Activated B cell treated with CpG ODN at 0.5 μM for 24 hours (primary cell): ENCODE measurements at regions of chr12 and their contacts with region 1.

Region 1: DNA sequence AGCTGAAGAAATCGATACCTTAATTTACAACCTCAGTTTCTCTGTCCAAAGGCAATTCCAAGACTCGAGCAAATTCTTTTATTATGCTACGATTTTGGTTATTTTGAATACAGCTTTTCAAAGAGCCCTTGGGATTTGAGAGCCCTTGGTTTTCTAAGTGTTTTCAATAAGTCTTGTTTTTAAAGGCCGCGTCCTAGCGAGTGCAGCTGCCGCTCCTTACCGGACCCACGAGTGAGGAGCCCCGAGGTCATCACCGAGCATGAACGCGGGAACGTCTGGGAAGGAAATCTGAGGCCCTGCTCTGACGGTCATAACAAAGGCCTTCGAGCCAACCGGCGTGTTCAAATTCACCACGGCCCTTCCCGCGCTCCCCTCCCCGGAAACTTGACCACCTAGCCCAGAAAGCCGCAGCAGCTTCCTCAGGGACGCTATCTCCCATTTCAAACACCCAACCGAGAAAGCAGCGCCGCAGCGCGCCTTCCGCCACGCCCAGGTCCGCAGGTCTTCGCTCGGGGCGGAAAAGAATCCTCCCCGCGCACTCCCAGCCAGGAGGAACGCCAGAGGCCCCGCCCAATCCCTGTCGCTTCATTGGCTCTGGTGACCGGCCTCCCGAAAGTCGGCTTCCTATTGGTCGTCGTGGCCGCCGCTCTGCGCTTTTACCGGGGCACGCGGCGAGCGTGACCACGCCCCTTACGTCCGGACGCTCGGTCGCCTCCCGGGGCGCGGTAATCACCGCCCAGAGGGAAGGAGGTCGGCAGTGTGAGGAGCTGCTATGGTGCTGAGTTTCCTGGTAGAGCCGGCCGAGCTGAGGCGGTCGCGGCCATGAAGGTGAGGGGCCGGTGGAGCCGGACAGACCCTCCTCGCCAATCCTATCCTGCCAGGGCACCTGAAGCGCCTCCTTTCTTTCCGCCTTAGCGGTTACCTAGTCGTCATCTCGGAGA is at the start of gene RNF34:
- DNase-seq: peak; percentile 93
- ATAC-seq: peak; percentile 91
- H3K4me3 Mint-ChIP-seq: peak within 1 kb of the TSS; percentile 96
- H3K27ac Mint-ChIP-seq: peak within 1 kb of the TSS; percentile 95
- H3K4me1 Mint-ChIP-seq: peaks cover 37% of the 10 kb centered on the region
- H3K27me3 Mint-ChIP-seq: no peaks in the 10 kb centered on the region
- CTCF ChIP-seq: no peak
- total RNA-seq, gene RNF34: 71.2 and 75.3 TPM in 2 replicates

Region 2: DNA sequence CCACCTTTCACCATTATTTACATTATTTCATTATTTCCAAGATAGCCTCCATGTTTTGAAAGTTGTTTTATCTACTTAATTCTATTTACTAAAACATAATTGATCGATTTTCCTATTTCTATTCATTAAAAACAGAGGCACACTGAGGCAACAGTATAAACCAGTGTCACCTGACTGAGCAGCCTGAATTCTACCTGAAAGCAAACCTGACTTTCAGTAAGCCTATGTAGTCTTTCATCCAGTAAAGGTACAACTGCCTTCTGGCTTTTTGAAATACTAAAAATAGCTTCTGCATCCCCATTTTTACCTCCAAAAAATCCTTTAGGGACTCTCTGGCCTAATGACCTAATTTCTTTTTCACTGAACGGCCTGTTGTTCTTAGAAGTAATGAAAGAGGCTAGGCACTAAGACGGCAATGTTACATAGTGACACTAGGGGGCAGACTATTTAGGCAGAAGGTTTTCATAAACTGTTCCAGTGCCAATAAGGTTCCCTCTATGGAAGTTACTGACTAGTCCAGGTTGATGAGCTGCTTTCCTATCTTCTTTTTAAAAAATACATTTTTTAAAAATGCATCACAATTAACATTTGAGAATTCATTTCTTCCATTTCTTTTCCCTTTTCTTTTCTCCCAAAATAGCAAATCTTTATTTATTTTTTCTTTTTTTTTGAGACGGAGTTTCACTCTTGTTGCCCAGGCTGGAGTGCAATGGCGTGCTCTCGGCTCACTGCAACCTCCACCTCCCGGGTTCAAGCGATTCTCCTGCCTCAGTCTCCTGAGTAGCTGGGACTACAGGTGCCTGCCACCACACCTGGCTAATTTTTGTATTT is 64.9 kb before region 1 on chr12:
- CTCF ChIA-PET with region 1: interaction called, 3 read pairs
- POLR2A ChIA-PET with region 1: interaction called, 3 read pairs
- intact Hi-C with region 1: loop called (anchors 1 kb)
- DNase-seq: no peak
- ATAC-seq: peak; percentile 69
- H3K4me3 Mint-ChIP-seq: no peak overlapping the region
- H3K27ac Mint-ChIP-seq: no peak overlapping the region
- H3K4me1 Mint-ChIP-seq: peaks cover 2% of the 10 kb centered on the region
- H3K27me3 Mint-ChIP-seq: no peaks in the 10 kb centered on the region
- CTCF ChIP-seq: peak; percentile 82

Region 3: GRCh38 chr12:121351820-121352681 is 47.6 kb before region 1 on chr12 and contains the start of gene ANAPC5:
- CTCF ChIA-PET with region 1: interaction called, 7 read pairs
- POLR2A ChIA-PET with region 1: interaction called, 42 read pairs
- intact Hi-C with region 1: loop called (anchors 1 kb)
- DNase-seq: peak; percentile 73
- ATAC-seq: peak; percentile 99
- H3K4me3 Mint-ChIP-seq: peak within 1 kb of the TSS; percentile 94
- H3K27ac Mint-ChIP-seq: peak within 1 kb of the TSS; percentile 91
- H3K4me1 Mint-ChIP-seq: peaks cover 28% of the 10 kb centered on the region
- H3K27me3 Mint-ChIP-seq: no peaks in the 10 kb centered on the region
- CTCF ChIP-seq: no peak
- total RNA-seq, gene ANAPC5: 116 and 143 TPM in 2 replicates

Region 4: DNA sequence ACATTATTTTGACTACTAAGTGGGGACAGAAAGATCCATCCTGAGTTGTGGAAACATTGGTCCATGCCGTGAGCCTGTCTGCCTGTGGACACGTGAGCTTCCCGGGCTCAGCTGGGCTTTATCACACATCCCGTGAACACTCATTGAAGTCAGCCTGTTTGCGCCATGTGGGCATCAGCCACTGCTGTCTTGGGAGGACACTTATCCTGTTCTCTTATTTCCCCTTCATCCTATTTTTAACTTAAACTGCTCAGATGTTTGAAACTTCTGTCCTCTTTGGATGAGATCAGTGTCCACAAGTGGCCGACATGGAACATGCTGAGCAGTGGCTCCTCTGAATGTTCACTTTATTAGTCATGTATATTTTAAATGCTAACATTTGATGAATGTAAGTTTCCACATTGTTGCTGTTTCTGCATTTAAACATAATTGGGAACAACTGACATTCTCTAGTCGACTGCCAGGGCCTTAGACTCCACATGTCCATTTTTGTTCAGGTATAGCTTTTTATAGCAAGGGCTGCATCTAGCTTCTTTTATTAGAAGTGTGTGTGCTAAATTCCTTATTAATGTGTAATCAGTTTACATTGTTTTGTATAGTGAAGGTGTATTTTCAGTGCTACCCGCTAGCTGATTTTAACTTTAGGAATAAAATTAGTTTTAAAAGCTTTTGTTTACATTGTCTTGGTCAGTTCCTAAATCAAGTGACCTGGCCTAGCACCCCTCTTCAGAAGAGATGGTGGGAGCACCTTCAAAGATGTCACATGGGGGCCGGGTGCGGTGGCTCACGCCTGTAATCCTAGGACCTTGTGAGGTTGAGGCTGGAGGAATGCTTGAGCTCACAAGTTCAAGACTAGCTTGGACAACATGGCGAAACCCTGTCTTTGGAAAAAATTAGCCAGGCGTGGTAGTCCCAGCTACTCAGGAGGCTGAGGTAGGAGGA is 24.3 kb after region 1 on chr12:
- CTCF ChIA-PET with region 1: no interaction called
- POLR2A ChIA-PET with region 1: interaction called, 64 read pairs
- intact Hi-C with region 1: loop called (anchors 1 kb)
- DNase-seq: no peak
- ATAC-seq: no peak
- H3K4me3 Mint-ChIP-seq: no peak overlapping the region
- H3K27ac Mint-ChIP-seq: peak overlapping the region; percentile 50
- H3K4me1 Mint-ChIP-seq: peaks cover 28% of the 10 kb centered on the region
- H3K27me3 Mint-ChIP-seq: no peaks in the 10 kb centered on the region
- CTCF ChIP-seq: no peak

Region 5: DNA sequence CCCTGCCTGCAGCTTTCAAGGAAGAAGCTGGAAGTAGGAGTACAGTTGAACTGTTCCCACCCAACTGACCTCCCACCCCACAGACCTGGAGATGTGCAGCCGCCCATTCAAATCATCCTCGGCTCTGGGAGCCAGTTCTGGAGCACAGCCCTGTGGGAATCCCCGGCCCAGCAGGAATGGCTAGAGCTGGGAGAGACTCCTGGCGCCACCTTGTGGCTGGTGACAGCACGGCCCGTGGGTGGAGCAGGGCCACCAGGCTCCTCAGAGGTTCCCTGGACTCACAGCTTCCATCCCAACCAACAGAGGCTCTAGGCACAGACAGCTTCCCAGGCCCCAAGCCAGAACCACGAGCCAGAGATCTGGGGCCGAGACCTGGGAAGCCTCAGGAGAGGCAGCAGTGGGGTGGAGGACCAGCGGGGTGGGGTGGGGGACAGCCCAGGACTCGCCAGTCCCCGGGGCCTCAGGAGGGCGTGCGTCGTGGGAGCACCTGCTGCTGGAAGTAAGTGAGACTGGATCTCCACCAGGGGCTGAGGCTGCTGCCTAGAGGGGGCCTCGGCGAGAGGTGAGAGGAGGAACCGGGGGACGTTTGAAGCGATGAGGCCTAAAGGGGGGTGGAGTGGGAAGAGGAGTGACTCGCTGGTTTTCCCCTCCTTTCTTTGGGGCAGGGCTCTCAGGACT is 43.7 kb after region 1 on chr12:
- CTCF ChIA-PET with region 1: interaction called, 11 read pairs
- POLR2A ChIA-PET with region 1: interaction called, 8 read pairs
- intact Hi-C with region 1: no loop called
- DNase-seq: peak; percentile 57
- ATAC-seq: peak; percentile 80
- H3K4me3 Mint-ChIP-seq: no peak overlapping the region
- H3K27ac Mint-ChIP-seq: peak overlapping the region; percentile 24
- H3K4me1 Mint-ChIP-seq: peaks cover 5% of the 10 kb centered on the region
- H3K27me3 Mint-ChIP-seq: no peaks in the 10 kb centered on the region
- CTCF ChIP-seq: peak; percentile 51

Region 6: GRCh38 chr12:121467115-121467793 is 67.6 kb after region 1 on chr12:
- CTCF ChIA-PET with region 1: no interaction called
- POLR2A ChIA-PET with region 1: interaction called, 4 read pairs
- intact Hi-C with region 1: loop called (anchors 1 kb)
- DNase-seq: peak; percentile 87
- ATAC-seq: peak; percentile 86
- H3K4me3 Mint-ChIP-seq: peak overlapping the region; percentile 41
- H3K27ac Mint-ChIP-seq: no peak overlapping the region
- H3K4me1 Mint-ChIP-seq: peaks cover 58% of the 10 kb centered on the region
- H3K27me3 Mint-ChIP-seq: no peaks in the 10 kb centered on the region
- CTCF ChIP-seq: no peak

Region 7: DNA sequence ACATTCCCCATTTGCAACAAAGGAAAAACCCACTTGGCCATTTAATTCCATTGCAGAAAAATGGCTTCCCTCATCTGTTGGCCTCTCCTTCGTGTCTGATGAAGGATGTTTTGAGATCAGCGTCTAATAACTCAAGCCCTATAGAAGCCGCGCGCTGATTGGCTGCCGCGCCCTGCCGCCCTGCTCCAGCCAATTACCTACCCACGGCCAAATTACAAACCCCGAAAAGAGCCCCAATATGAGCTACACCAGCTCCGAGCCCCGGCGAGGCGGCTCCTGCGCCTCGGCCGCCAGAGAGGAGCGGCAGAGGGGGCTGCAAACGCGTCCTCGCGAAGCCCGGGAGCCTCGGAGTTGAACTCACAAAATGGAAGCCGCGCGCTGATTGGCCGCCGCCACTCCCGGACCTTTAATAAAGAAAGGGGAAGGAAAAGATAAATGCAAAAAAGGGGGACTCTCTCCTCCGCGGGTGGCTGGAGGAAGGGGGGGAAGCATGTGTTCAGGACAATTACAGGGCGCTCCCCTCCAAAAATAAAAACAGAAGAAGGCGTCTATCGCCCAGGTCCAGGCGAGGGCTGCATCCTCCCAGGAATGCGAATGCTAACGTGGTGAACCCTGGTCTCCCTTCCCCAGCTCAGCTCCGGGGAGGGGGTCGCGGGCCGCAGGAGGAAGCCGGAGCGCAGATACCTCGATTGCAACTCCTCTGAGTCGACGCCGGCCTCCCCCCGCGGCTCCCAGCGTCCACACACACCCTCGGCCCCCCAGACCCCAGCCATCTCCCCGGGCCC is 403.4 kb after region 1 on chr12:
- CTCF ChIA-PET with region 1: no interaction called
- POLR2A ChIA-PET with region 1: no interaction called
- intact Hi-C with region 1: loop called (anchors 1 kb)
- DNase-seq: peak; percentile 91
- ATAC-seq: peak; percentile 40
- H3K4me3 Mint-ChIP-seq: peak overlapping the region; percentile 93
- H3K27ac Mint-ChIP-seq: peak overlapping the region; percentile 100
- H3K4me1 Mint-ChIP-seq: peaks cover 57% of the 10 kb centered on the region
- H3K27me3 Mint-ChIP-seq: no peaks in the 10 kb centered on the region
- CTCF ChIP-seq: no peak